ENCODE measurements at regions of chr5 and their contacts with region 1.

Region 1: GRCh38 chr5:150209020-150209635 is 19.3 kb downstream of the SLC6A7 start:
- DNase-seq: peak; percentile 83 to 84
- H3K4me3 ChIP-seq: peak overlapping the region; percentile 29; the same call in 1 of the 2 replicates
- H3K27ac ChIP-seq: peak overlapping the region; percentile 50
- H3K4me1 ChIP-seq: peaks cover 22% of the 10 kb centered on the region
- H3K27me3 ChIP-seq: no peaks in the 10 kb centered on the region
- CTCF ChIP-seq: no peak

Region 2: DNA sequence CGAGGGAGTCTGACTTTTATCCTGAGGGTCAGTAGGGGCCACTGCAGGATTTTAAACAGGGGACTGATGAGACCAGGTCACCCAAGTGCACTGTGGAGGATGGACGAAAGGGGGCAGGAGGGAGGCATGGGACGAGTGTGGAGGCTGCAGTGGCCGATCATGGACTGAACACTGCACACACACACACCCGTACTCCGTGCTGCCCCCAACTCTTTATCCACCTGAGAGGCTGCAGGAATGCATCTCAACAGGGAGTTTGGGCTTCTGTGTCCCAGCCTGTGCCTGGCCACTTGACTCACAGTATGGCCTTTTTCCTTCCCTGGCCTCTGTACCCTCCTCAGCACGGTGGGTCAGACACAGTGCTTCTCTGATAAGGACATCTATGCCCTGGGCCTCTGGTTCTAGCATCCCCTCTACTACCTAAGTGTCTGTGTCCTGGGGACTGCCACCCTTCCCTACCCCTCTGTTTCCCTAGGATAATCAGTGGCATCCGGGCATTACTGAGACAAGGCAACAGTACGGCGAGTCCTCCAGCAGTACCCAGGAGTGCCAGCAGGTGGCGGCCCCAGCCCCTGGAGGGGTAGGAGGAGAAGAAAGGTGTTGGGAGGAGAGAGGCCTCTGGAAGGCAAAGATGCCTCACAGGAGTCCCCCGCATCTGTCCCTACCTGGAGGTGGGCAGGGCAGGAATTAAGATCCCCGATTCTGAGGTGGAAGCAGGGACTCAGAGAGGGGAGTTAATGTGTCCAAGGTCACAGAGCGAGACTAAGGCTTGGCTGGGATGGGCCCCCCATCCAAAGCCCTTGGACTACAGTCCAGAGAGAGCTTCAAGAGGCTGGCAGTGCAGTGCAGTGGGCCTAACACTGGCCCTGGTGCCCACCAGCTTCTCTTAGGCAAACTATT is 47.6 kb before region 1 on chr5:
- CTCF ChIA-PET with region 1: interaction called, 4 read pairs
- POLR2A ChIA-PET with region 1: interaction called, 4 read pairs
- intact Hi-C with region 1: loop called (anchors 2 kb)
- DNase-seq: peak; percentile 51 to 91
- H3K4me3 ChIP-seq: peak overlapping the region; percentile 18; the same call in 1 of the 2 replicates
- H3K27ac ChIP-seq: no peak overlapping the region
- H3K4me1 ChIP-seq: no peaks in the 10 kb centered on the region; the same call in 1 of the 2 replicates
- H3K27me3 ChIP-seq: no peaks in the 10 kb centered on the region
- CTCF ChIP-seq: peak; percentile 96

Region 3: DNA sequence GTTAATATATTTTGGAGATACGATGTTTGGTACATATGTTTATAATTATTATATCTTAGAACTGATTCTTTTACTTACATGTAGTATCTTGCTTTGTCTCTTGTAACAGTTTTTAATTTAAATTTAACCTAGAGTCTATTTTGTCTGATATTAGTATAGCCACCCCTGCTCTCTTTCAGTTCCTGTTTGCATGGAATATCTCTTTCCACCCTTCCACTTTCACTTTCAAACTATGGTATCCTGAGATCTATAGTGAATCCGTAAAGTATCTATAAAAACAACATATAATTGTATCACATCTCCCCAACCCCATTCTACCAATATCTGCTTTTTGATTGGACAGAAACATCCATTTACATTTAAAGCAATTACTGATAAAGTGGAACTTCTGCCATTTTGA is 644.4 kb after region 1 on chr5:
- CTCF ChIA-PET with region 1: no interaction called
- POLR2A ChIA-PET with region 1: interaction called, 13 read pairs
- intact Hi-C with region 1: no loop called
- DNase-seq: no peak
- H3K4me3 ChIP-seq: no peak overlapping the region
- H3K27ac ChIP-seq: no peak overlapping the region
- H3K4me1 ChIP-seq: no peaks in the 10 kb centered on the region
- H3K27me3 ChIP-seq: no peaks in the 10 kb centered on the region; the same call in 1 of the 2 replicates
- CTCF ChIP-seq: no peak

Measured in PC-9 (cell line).